ENCODE measurements at regions of chr11 and their contacts with region 1.

Region 1: GRCh38 chr11:134634897-134635831 is 223.1 kb upstream of the B3GAT1 start:
- DNase-seq: peak in 4 of 10 donors; percentile 23 to 54 (median 40)
- H3K4me3 ChIP-seq: no peak overlapping the region
- H3K27ac ChIP-seq: no peak overlapping the region
- H3K27me3 ChIP-seq: no peaks in the 10 kb centered on the region
- CTCF ChIP-seq: peak in 51 of 56 donors; percentile 18 to 64 (median 39)

Region 2: DNA sequence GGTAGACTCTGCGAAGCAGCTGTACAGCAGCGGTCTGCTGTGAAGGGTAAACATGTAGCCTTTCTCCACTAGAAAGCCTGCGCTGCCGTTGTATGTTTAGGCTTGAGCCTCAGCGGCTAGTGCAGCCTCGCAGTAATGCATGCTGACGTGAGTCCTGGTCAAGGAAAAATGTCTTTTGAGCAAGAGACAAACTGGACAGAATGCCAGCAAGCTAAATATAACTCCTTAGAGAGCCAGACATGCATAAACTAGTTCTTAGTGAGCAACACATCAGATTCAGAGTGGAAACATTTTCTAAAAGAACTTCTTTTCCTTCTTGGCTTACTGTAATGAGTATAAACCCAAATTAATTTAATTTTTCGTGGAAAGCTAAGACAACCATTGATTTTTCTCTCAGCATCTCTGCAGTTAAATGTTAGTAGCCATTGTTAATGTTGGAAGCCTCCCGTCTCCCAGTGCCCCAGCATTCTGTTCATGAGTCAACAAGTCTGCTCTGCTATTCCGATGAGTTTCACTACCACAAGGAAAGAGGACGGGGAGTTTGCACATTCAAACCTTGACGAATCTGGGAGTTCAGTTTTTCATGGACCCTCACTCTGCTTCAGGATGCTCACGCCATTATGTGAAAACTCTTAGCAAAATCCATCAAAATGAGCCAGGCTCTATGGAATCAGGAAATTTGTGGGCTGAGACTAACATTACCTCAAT is 514.9 kb before region 1 on chr11:
- intact Hi-C with region 1: no loop called
- DNase-seq: peak in 8 of 10 donors; percentile 29 to 75 (median 64)
- H3K4me3 ChIP-seq: peak overlapping the region; percentile 7 to 64 (median 44)
- H3K27ac ChIP-seq: peak overlapping the region; percentile 84 to 99 (median 96)
- H3K27me3 ChIP-seq: no peaks in the 10 kb centered on the region
- CTCF ChIP-seq: peak in 2 of 56 donors; percentile 2 to 7

Region 3: GRCh38 chr11:134360050-134360835 is 274.9 kb before region 1 on chr11:
- intact Hi-C with region 1: loop called in 1 of 2 experiments (anchors 2 kb)
- DNase-seq: peak; percentile 68 to 94 (median 90)
- H3K4me3 ChIP-seq: peak overlapping the region in 1 of 59 donors; percentile 21
- H3K27ac ChIP-seq: no peak overlapping the region
- H3K27me3 ChIP-seq: peaks cover 0 to 6% (median 0%) of the 10 kb centered on the region in 45 donors
- CTCF ChIP-seq: peak; percentile 64 to 99 (median 94)

Region 4: DNA sequence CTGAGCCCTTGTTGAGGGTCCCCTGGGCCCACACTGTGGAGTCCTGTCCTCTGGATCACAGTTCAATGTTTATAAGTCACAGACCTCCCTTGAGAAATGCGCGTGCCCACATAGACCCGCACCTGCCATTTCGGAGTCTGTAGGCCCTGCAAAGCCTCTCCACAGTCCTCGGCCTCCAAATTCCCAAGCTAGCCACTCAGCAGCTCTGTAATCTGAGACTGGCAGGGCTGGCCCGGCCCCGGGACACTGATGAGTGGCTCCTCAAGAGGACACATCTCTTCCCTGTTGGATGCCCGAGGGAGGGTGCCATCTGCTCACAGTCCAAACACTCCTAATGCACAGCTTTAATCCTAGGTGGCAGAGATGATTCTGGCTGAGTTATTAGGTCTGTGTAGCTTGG is 262.2 kb before region 1 on chr11:
- intact Hi-C with region 1: loop called in 1 of 2 experiments (anchors 10 kb)
- DNase-seq: peak in 7 of 10 donors; percentile 58 to 79 (median 63)
- H3K4me3 ChIP-seq: no peak overlapping the region
- H3K27ac ChIP-seq: peak overlapping the region in 37 of 59 donors; percentile 1 to 69 (median 40)
- H3K27me3 ChIP-seq: no peaks in the 10 kb centered on the region
- CTCF ChIP-seq: peak in 4 of 56 donors; percentile 6 to 12 (median 11)

Region 5: DNA sequence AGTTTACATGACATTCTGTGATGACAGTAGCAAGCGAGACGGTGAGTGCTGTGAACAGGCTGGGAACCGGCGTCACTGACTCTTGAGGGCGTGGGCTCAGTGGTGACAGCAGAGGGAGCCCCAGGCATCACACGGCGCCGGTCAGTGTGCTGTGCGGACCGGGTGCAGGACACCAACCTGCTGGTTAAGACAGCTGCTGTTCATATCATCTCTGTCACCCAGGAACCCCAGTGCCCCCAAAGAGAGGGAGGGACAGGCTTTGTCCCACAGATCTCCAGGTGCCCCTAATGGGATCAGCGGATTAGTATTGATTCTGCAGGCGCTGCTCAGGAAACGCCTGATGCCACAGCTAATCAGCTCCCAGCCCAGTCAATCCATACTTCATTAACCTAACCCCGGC is 241.5 kb before region 1 on chr11:
- intact Hi-C with region 1: loop called (anchors 10 kb)
- DNase-seq: peak; percentile 19 to 77 (median 72)
- H3K4me3 ChIP-seq: peak overlapping the region in 2 of 59 donors; percentile 2 to 12
- H3K27ac ChIP-seq: peak overlapping the region in 57 of 59 donors; percentile 1 to 98 (median 75)
- H3K27me3 ChIP-seq: no peaks in the 10 kb centered on the region
- CTCF ChIP-seq: peak in 54 of 56 donors; percentile 21 to 80 (median 64)

Measured in dorsolateral prefrontal cortex (tissue), 120 donors.